Heart right ventricle (tissue), 16 donors: ENCODE measurements at regions of chr18 and their contacts with region 1.

Region 1: GRCh38 chr18:32271672-32272208 is 81.9 kb downstream of the MEP1B start:
- DNase-seq: peak in 1 of 2 donors; percentile 25
- ATAC-seq: peak; percentile 50 to 76 (median 72)
- H3K4me3 ChIP-seq: no peak overlapping the region
- H3K27ac ChIP-seq: no peak overlapping the region
- H3K4me1 ChIP-seq: peaks cover 0 to 9% (median 5%) of the 10 kb centered on the region in 9 donors
- H3K27me3 ChIP-seq: no peaks in the 10 kb centered on the region
- CTCF ChIP-seq: peak; percentile 32 to 77 (median 71)

Region 2: GRCh38 chr18:32158108-32158624 is 113.6 kb before region 1 on chr18:
- intact Hi-C with region 1: loop called in 7 of 10 experiments (anchors 5 to 10 kb)
- DNase-seq: peak; percentile 63 to 77
- ATAC-seq: peak; percentile 90 to 98 (median 95)
- H3K4me3 ChIP-seq: peak overlapping the region in 7 of 10 donors; percentile 13 to 35 (median 25)
- H3K27ac ChIP-seq: no peak overlapping the region
- H3K4me1 ChIP-seq: peaks cover 0 to 12% (median 0%) of the 10 kb centered on the region in 9 donors
- H3K27me3 ChIP-seq: peaks cover 0 to 9% (median 0%) of the 10 kb centered on the region in 7 donors
- CTCF ChIP-seq: peak; percentile 68 to 90 (median 82)

Region 3: DNA sequence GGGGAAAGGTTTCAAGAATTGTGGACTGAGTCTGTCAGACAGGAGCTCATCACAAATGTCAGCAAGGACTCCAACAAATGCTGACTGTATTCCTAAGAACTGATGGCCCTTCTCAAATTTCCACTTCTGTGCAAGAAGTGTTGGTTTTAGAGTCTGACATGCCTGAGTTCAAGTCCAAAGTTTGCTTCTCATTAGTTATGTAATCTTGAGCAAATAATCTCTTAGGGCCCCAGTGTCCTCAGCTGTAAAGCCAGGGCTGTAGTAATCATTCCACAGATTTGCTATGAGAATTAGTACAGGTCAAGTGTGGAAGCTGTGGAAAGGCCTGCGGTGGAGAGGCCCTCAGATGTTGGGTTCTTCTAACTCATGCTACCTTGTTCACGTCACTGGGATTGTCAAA is 58.0 kb before region 1 on chr18:
- intact Hi-C with region 1: no loop called
- DNase-seq: no peak
- ATAC-seq: no peak
- H3K4me3 ChIP-seq: no peak overlapping the region
- H3K27ac ChIP-seq: no peak overlapping the region
- H3K4me1 ChIP-seq: peaks cover 0 to 1% (median 0%) of the 10 kb centered on the region in 9 donors
- H3K27me3 ChIP-seq: no peaks in the 10 kb centered on the region
- CTCF ChIP-seq: no peak